CD4-positive, alpha-beta memory T cell (primary cell): ENCODE measurements at regions of chr14 and their contacts with region 1.

Region 1: GRCh38 chr14:73613046-73613383 is 698 bp downstream of the ACOT6 start:
- DNase-seq: no peak
- H3K4me3 ChIP-seq: peak overlapping the region; percentile 28 to 82
- H3K4me3 Mint-ChIP-seq: peak overlapping the region; percentile 85 to 90 (median 87)
- H3K27ac ChIP-seq: peak overlapping the region; percentile 40
- H3K27ac Mint-ChIP-seq: peak overlapping the region; percentile 46 to 91 (median 75)
- H3K4me1 ChIP-seq: peaks cover 3% of the 10 kb centered on the region
- H3K4me1 Mint-ChIP-seq: peaks cover 0 to 6% (median 3%) of the 10 kb centered on the region in 4 donors
- H3K27me3 ChIP-seq: no peaks in the 10 kb centered on the region
- H3K27me3 Mint-ChIP-seq: no peaks in the 10 kb centered on the region

Region 2: GRCh38 chr14:73272393-73272792 is 340.6 kb before region 1 on chr14:
- CTCF ChIA-PET with region 1: no interaction called
- POLR2A ChIA-PET with region 1: no interaction called
- intact Hi-C with region 1: no loop called
- DNase-seq: no peak
- H3K4me3 ChIP-seq: no peak overlapping the region
- H3K4me3 Mint-ChIP-seq: no peak overlapping the region
- H3K27ac ChIP-seq: no peak overlapping the region
- H3K27ac Mint-ChIP-seq: no peak overlapping the region
- H3K4me1 ChIP-seq: no peaks in the 10 kb centered on the region
- H3K4me1 Mint-ChIP-seq: peaks cover 6 to 18% (median 9%) of the 10 kb centered on the region in 4 donors
- H3K27me3 ChIP-seq: no peaks in the 10 kb centered on the region
- H3K27me3 Mint-ChIP-seq: peaks cover 0 to 1% of the 10 kb centered on the region in 2 donors

Region 3: DNA sequence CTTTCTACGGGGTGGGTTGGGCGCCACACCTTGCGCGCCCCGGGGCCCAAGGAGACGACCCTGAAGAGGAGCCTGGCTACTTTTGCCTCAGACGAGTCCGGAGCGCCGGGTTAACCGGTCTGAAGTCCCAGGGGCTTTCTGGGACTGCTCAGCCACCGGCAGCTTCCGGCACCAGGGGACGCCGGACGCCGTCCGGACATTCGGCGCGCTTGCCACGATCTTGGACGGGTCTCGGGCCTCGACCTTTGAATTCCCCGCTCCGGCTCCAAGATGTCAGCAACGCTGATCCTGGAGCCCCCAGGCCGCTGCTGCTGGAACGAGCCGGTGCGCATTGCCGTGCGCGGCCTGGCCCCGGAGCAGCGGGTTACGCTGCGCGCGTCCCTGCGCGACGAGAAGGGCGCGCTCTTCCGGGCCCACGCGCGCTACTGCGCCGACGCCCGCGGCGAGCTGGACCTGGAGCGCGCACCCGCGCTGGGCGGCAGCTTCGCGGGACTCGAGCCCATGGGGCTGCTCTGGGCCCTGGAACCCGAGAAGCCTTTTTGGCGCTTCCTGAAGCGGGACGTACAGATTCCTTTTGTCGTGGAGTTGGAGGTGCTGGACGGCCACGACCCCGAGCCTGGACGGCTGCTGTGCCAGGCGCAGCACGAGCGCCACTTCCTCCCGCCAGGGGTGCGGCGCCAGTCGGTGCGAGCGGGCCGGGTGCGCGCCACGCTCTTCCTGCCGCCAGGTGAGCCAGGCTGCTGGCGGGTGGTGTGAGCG is 21.1 kb before region 1 on chr14 and contains the start of gene ACOT4:
- CTCF ChIA-PET with region 1: interaction called, 9 read pairs
- POLR2A ChIA-PET with region 1: interaction called, 93 read pairs
- intact Hi-C with region 1: loop called (anchors 1 kb)
- DNase-seq: peak; percentile 64 to 76 (median 76)
- H3K4me3 ChIP-seq: peak within 1 kb of the TSS; percentile 63 to 77
- H3K4me3 Mint-ChIP-seq: peak within 1 kb of the TSS; percentile 73 to 87 (median 82)
- H3K27ac ChIP-seq: peak within 1 kb of the TSS; percentile 53
- H3K27ac Mint-ChIP-seq: peak within 1 kb of the TSS; percentile 30 to 92 (median 81)
- H3K4me1 ChIP-seq: peaks cover 10% of the 10 kb centered on the region
- H3K4me1 Mint-ChIP-seq: peaks cover 5 to 10% (median 7%) of the 10 kb centered on the region in 4 donors
- H3K27me3 ChIP-seq: no peaks in the 10 kb centered on the region
- H3K27me3 Mint-ChIP-seq: no peaks in the 10 kb centered on the region
- total RNA-seq, gene ACOT4: 1.2 to 1.5 TPM

Region 4: DNA sequence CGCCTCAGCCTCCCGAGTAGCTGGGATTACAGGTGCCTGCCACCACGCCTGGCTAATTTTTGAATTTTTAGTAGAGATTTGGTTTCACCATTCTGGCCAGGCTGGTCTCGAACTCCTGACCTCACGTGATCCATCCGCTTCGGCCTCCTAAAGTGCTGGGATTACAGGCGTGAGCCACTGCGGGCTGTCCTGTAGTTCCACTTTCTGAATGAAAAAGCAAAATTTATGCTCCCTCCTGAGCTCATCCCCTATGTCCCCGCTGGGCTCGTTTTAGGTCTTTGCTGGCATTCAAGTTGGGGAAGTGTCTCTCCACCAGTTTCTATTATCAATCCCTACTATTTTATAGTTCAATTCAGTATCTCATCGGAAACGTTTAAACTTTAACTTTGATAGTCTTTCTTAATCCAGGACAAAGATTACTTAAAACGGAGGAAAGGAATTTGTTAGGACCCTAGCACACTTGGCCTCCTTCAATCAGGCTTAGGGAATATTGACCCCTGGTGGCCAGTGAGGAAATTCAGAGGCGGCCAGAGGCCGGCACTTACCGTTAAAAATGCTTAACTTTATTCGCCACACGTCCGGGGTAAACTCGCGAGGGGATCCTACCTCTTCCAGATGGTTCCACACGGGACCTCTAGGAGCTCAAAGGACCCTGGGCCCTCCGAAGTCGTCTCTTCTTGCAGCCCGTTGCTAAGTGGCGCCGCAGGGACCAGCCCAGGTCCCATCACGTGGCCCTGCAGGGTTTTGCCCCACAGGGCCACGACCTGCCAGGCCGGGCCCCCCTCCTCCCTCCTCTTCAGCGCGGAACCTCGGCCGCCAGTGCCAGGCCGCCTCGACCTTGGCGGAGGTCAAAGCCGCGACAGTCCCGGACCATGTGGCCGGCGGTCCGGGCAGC is 20.3 kb after region 1 on chr14:
- CTCF ChIA-PET with region 1: interaction called, 15 read pairs
- POLR2A ChIA-PET with region 1: interaction called, 4 read pairs
- intact Hi-C with region 1: no loop called
- DNase-seq: peak; percentile 52 to 67 (median 57)
- H3K4me3 ChIP-seq: peak overlapping the region; percentile 11 to 57
- H3K4me3 Mint-ChIP-seq: peak overlapping the region; percentile 71 to 84 (median 80)
- H3K27ac ChIP-seq: no peak overlapping the region
- H3K27ac Mint-ChIP-seq: peak overlapping the region in 3 of 7 donors; percentile 6 to 59 (median 49)
- H3K4me1 ChIP-seq: peaks cover 8% of the 10 kb centered on the region
- H3K4me1 Mint-ChIP-seq: peaks cover 3 to 7% (median 4%) of the 10 kb centered on the region in 4 donors
- H3K27me3 ChIP-seq: no peaks in the 10 kb centered on the region
- H3K27me3 Mint-ChIP-seq: peaks cover 5 to 18% of the 10 kb centered on the region in 2 donors

Region 5: GRCh38 chr14:73644531-73645247 is 31.7 kb after region 1 on chr14 and contains the start of gene DNAL1:
- CTCF ChIA-PET with region 1: no interaction called
- POLR2A ChIA-PET with region 1: interaction called, 17 read pairs
- intact Hi-C with region 1: no loop called
- DNase-seq: peak; percentile 88 to 90 (median 89)
- H3K4me3 ChIP-seq: peak within 1 kb of the TSS; percentile 73 to 81
- H3K4me3 Mint-ChIP-seq: peak within 1 kb of the TSS; percentile 89 to 99 (median 95)
- H3K27ac ChIP-seq: peak within 1 kb of the TSS; percentile 64
- H3K27ac Mint-ChIP-seq: peak within 1 kb of the TSS; percentile 76 to 97 (median 97)
- H3K4me1 ChIP-seq: peaks cover 11% of the 10 kb centered on the region
- H3K4me1 Mint-ChIP-seq: peaks cover 11 to 19% (median 17%) of the 10 kb centered on the region in 4 donors
- H3K27me3 ChIP-seq: no peaks in the 10 kb centered on the region
- H3K27me3 Mint-ChIP-seq: no peaks in the 10 kb centered on the region
- total RNA-seq, gene DNAL1: 5.4 to 7.8 TPM

Region 6: DNA sequence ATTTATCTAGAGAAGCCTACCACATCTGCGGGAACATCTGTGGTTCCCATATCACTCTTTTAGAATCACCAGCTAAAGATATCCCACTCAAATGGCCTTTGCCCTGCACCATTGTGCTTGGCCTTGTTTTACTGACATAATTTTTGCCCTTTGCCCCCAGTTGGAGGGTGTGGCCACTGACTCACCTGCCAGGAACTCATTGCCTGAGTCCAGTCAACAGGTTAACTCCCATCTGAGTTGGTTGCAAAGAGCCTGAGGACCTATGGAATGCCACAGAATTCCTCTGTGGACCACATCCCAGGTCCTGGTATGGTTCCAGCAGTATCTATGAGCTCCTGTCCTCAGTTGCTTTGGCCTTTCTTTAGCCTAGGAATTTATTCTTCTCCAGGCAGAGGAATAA is 183.0 kb after region 1 on chr14:
- CTCF ChIA-PET with region 1: no interaction called
- POLR2A ChIA-PET with region 1: no interaction called
- intact Hi-C with region 1: no loop called
- DNase-seq: no peak
- H3K4me3 ChIP-seq: no peak overlapping the region
- H3K4me3 Mint-ChIP-seq: no peak overlapping the region
- H3K27ac ChIP-seq: no peak overlapping the region
- H3K27ac Mint-ChIP-seq: peak overlapping the region in 1 of 7 donors; percentile 12
- H3K4me1 ChIP-seq: no peaks in the 10 kb centered on the region
- H3K4me1 Mint-ChIP-seq: no peaks in the 10 kb centered on the region
- H3K27me3 ChIP-seq: no peaks in the 10 kb centered on the region
- H3K27me3 Mint-ChIP-seq: no peaks in the 10 kb centered on the region